ENCODE measurements at regions of chr2 and their contacts with region 1.

Region 1: GRCh38 chr2:42421601-42422252 is 60.7 kb upstream of the COX7A2L start:
- DNase-seq: no peak
- ATAC-seq: no peak
- H3K4me3 ChIP-seq: no peak overlapping the region
- H3K27ac ChIP-seq: no peak overlapping the region; the same call in 1 of the 2 replicates
- H3K4me1 ChIP-seq: peaks cover 15% of the 10 kb centered on the region
- H3K27me3 ChIP-seq: no peaks in the 10 kb centered on the region
- CTCF ChIP-seq: no peak

Region 2: GRCh38 chr2:42314892-42315467 is 106.7 kb before region 1 on chr2:
- CTCF ChIA-PET with region 1: no interaction called
- POLR2A ChIA-PET with region 1: no interaction called
- in situ Hi-C with region 1: no loop called
- intact Hi-C with region 1: no loop called
- DNase-seq: peak; percentile 67
- ATAC-seq: no peak
- H3K4me3 ChIP-seq: no peak overlapping the region
- H3K27ac ChIP-seq: no peak overlapping the region
- H3K4me1 ChIP-seq: no peaks in the 10 kb centered on the region
- H3K27me3 ChIP-seq: no peaks in the 10 kb centered on the region
- CTCF ChIP-seq: no peak

Region 3: GRCh38 chr2:42725657-42726056 is 303.9 kb after region 1 on chr2:
- CTCF ChIA-PET with region 1: no interaction called
- POLR2A ChIA-PET with region 1: interaction called, 11 read pairs
- in situ Hi-C with region 1: no loop called
- intact Hi-C with region 1: no loop called
- DNase-seq: no peak
- ATAC-seq: no peak
- H3K4me3 ChIP-seq: no peak overlapping the region
- H3K27ac ChIP-seq: no peak overlapping the region
- H3K4me1 ChIP-seq: no peaks in the 10 kb centered on the region
- H3K27me3 ChIP-seq: no peaks in the 10 kb centered on the region
- CTCF ChIP-seq: no peak